Astrocyte of the cerebellum (primary cell): ENCODE measurements at regions of chr3 and their contacts with region 1.

Region 1: DNA sequence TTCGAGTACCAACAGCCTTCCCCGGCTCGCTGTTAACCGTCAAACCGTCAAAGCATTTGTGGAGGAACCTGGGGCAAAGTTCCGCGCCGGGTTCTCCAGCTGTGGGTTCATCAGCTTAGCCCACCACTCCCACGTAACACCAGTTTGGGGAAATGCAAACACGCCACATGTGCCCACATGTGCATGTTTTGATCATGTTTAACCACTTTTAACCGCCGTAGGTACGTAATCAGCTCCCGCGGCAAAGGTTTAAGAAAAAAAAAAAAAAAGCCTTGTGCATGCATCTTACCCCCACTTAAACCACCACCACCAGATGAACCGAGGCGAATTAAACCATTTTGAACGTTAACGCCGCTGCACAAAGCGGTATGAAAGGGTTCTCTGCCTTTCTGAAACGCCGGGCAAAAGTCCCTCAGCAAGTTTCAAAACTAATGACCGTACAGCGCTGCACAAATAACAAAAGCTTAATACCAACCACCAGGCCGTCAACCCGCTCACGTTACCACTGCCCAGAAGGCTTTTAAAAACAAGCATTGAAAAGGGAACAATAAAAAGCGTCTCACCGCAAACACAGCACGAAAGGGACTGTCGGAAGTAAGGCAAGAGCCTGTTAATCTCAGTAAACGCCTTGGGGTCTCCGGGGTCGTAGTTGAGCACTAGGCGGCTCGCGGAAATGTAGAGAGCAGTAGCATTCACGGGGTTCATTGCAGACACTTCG is 1.6 kb downstream of the MSL2 start:
- DNase-seq: no peak
- H3K4me3 ChIP-seq: peak overlapping the region; percentile 63
- CTCF ChIP-seq: no peak

Region 2: GRCh38 chr3:136109499-136109898 is 85.1 kb before region 1 on chr3:
- in situ Hi-C with region 1: no loop called
- DNase-seq: no peak
- H3K4me3 ChIP-seq: no peak overlapping the region
- CTCF ChIP-seq: no peak

Region 3: GRCh38 chr3:136142592-136142991 is 52.0 kb before region 1 on chr3:
- in situ Hi-C with region 1: loop called (anchors 5 kb)
- DNase-seq: peak; percentile 75
- H3K4me3 ChIP-seq: no peak overlapping the region
- CTCF ChIP-seq: no peak

Region 4: DNA sequence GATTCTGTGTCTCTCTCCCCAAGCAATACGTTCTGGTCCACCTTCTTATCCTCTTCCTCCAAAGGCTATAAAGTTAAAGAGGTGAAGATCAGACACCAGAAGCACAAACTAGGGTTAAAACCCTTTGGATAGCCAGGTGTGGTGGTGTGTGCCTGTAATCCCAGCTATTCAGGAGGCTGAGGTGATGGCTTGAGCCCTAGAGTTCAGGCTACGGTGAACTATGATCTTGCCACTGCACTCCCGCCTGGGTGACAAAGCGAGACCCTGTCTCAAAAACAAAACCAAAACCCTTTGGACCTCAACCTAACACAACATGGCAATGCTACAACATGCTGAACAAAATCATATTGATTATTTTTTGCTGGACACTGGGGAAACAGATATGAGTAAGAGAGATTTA is 41.6 kb before region 1 on chr3:
- in situ Hi-C with region 1: no loop called
- DNase-seq: no peak
- H3K4me3 ChIP-seq: no peak overlapping the region
- CTCF ChIP-seq: no peak